ENCODE measurements at regions of chr15 and their contacts with region 1.

Region 1: GRCh38 chr15:88454867-88455810 is 12.0 kb downstream of the MRPL46 start:
- DNase-seq: no peak
- ATAC-seq: peak; percentile 83
- H3K4me3 Mint-ChIP-seq: no peak overlapping the region
- H3K27ac Mint-ChIP-seq: no peak overlapping the region
- H3K4me1 Mint-ChIP-seq: peaks cover 2% of the 10 kb centered on the region
- H3K27me3 Mint-ChIP-seq: peaks cover 2% of the 10 kb centered on the region
- CTCF ChIP-seq: no peak

Region 2: DNA sequence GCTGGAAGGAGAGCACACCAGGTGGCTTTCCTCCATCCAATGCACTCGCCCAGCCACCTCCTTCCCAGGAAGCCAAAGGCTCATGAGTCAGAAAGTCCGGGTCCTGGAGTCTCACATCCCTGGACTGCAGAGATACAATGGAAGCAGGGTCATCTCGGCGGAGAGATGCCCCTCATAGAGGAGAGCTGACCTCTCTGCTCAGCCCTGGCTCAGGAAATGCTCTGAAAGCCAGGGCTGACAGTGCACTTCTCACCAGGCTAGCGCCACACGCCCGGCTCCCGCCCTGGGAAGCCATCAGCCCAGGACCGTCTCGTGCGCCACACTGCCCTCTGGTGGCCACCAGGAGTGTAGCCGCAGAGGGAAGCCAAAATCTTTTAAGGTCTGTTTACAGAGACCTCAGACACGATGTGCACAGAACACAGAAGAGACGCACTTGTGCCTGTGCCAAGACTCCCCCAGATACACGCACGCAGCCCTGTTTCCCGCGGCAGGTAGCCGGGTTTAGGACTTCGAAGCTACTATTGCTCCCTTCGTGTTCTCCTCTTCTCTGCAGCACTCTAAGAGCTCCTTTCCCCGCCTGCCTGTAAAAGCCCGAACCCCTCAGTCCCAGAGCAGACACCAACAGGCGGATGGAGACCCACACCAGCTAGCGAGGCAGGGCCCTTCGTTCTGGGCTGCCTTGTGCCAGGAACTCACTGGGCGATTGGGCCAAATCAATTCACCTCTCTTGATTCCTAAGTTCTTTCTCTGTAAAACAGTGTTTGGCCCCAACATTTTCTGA is 208.3 kb before region 1 on chr15:
- CTCF ChIA-PET with region 1: interaction called, 4 read pairs
- POLR2A ChIA-PET with region 1: no interaction called
- intact Hi-C with region 1: loop called (anchors 10 kb)
- DNase-seq: peak; percentile 64
- ATAC-seq: peak; percentile 74
- H3K4me3 Mint-ChIP-seq: no peak overlapping the region
- H3K27ac Mint-ChIP-seq: no peak overlapping the region
- H3K4me1 Mint-ChIP-seq: peaks cover 6% of the 10 kb centered on the region
- H3K27me3 Mint-ChIP-seq: peaks cover 11% of the 10 kb centered on the region
- CTCF ChIP-seq: no peak

Region 3: DNA sequence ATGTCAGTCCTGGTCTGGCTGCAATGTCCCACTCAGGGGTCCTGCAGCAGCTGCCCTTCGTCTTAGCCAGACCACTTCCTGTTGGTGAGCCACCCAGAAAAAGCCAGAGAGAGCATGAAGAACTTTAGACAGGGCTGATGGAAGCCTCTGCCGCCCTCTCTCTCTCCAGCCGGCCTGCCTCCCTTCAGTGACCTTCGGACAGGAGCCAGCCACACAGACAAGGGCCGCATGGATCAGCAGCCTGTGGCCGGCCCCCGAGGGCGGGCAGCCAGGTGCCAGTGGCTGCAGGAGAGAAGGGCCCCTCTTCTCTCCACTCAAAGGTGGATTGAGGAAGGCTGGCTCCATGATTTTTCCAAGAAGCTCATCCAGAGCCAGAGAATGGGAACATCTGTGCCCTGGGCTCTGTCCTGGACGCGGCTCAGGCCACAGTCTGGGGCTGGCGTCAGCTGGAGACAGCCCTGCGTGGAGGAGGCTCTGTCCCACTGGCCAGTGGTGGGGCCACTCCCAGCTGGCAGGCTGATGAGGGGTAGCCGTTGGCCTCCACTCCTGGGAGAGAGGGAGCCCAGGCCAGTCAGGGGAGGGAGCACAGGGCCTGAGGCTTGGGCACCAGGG is 226.6 kb after region 1 on chr15:
- CTCF ChIA-PET with region 1: no interaction called
- POLR2A ChIA-PET with region 1: no interaction called
- intact Hi-C with region 1: no loop called
- DNase-seq: no peak
- ATAC-seq: no peak
- H3K4me3 Mint-ChIP-seq: no peak overlapping the region
- H3K27ac Mint-ChIP-seq: no peak overlapping the region
- H3K4me1 Mint-ChIP-seq: peaks cover 14% of the 10 kb centered on the region
- H3K27me3 Mint-ChIP-seq: peaks cover 4% of the 10 kb centered on the region
- CTCF ChIP-seq: no peak

Region 4: DNA sequence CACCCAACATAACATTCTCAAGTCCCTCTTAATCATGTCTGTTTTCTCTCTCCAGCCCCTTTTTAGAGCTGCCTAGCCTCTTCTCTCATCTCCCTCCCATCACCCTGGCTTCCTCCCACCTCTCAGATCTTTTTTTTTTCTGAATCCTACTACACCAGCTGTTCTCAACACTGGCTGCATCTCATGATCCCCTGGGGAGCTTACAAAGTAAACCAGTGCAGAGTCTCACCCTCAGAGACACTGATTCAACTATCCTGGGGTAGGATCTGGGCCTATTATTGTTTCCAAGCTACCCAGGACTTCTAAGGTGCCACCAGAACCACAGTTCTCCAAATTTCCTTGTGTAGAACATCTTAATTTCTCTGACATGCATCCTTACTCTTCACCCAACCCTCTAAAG is 297.8 kb after region 1 on chr15:
- CTCF ChIA-PET with region 1: no interaction called
- POLR2A ChIA-PET with region 1: no interaction called
- intact Hi-C with region 1: no loop called
- DNase-seq: no peak
- ATAC-seq: no peak
- H3K4me3 Mint-ChIP-seq: no peak overlapping the region
- H3K27ac Mint-ChIP-seq: no peak overlapping the region
- H3K4me1 Mint-ChIP-seq: peaks cover 3% of the 10 kb centered on the region
- H3K27me3 Mint-ChIP-seq: peaks cover 13% of the 10 kb centered on the region
- CTCF ChIP-seq: no peak